ENCODE measurements at regions of chr12 and their contacts with region 1.

Region 1: GRCh38 chr12:12200363-12200762 is 66.5 kb downstream of the LRP6 start:
- DNase-seq: no peak
- ATAC-seq: no peak
- H3K4me3 ChIP-seq: no peak overlapping the region
- H3K4me3 Mint-ChIP-seq: no peak overlapping the region
- H3K27ac ChIP-seq: no peak overlapping the region
- H3K27ac Mint-ChIP-seq: no peak overlapping the region
- H3K4me1 ChIP-seq: no peaks in the 10 kb centered on the region
- H3K4me1 Mint-ChIP-seq: no peaks in the 10 kb centered on the region
- H3K27me3 ChIP-seq: peaks cover 0 to 11% of the 10 kb centered on the region in 2 experiments
- H3K27me3 Mint-ChIP-seq: peaks cover 0 to 9% of the 10 kb centered on the region in 2 donors

Region 2: GRCh38 chr12:12123036-12123604 is 77.2 kb before region 1 on chr12:
- CTCF ChIA-PET with region 1: no interaction called
- POLR2A ChIA-PET with region 1: no interaction called
- DNase-seq: no peak
- ATAC-seq: no peak
- H3K4me3 ChIP-seq: no peak overlapping the region
- H3K4me3 Mint-ChIP-seq: no peak overlapping the region
- H3K27ac ChIP-seq: no peak overlapping the region
- H3K27ac Mint-ChIP-seq: no peak overlapping the region
- H3K4me1 ChIP-seq: no peaks in the 10 kb centered on the region
- H3K4me1 Mint-ChIP-seq: no peaks in the 10 kb centered on the region
- H3K27me3 ChIP-seq: no peaks in the 10 kb centered on the region
- H3K27me3 Mint-ChIP-seq: no peaks in the 10 kb centered on the region

Region 3: DNA sequence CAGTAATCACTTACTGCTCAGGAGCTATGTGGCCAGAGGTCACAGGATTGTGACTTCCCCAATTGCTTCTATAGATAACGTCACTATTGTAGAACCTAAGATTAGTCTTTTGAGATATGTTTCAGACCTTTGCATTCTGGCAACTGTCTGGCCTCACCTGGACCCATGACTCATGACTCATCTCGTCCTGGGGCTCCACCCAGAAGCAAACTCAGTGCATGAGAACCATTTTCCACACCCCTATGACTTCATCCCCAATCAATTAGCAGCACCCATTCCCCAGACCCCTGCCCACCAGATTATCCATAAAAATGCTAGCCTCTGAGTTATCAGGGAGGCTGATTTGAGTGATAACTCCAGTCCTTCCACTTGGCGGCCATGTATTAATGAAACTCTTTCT is 1183.0 kb after region 1 on chr12:
- CTCF ChIA-PET with region 1: no interaction called
- POLR2A ChIA-PET with region 1: interaction called in 1 of 2 experiments, 15 read pairs
- DNase-seq: no peak
- ATAC-seq: no peak
- H3K4me3 ChIP-seq: no peak overlapping the region
- H3K4me3 Mint-ChIP-seq: no peak overlapping the region
- H3K27ac ChIP-seq: no peak overlapping the region
- H3K27ac Mint-ChIP-seq: no peak overlapping the region
- H3K4me1 ChIP-seq: no peaks in the 10 kb centered on the region
- H3K4me1 Mint-ChIP-seq: no peaks in the 10 kb centered on the region
- H3K27me3 ChIP-seq: peaks cover 0 to 14% of the 10 kb centered on the region in 2 experiments
- H3K27me3 Mint-ChIP-seq: peaks cover 3 to 17% of the 10 kb centered on the region in 2 donors

Measured in T-cell (primary cell).